Ovary (tissue), 10 donors: ENCODE measurements at regions of chr3 and their contacts with region 1.

Region 1: GRCh38 chr3:47475570-47476329 is at the start of gene SCAP:
- DNase-seq: peak; percentile 92 to 97 (median 95)
- H3K4me3 ChIP-seq: peak within 1 kb of the TSS; percentile 66
- H3K27ac ChIP-seq: peak within 1 kb of the TSS in 1 of 2 donors; percentile 70
- H3K4me1 ChIP-seq: peaks cover 12% of the 10 kb centered on the region
- H3K27me3 ChIP-seq: no peaks in the 10 kb centered on the region
- CTCF ChIP-seq: peak; percentile 88 to 99 (median 99)
- EP300 ChIP-seq: no peak
- POLR2A ChIP-seq: peak; percentile 41
- total RNA-seq, gene SCAP: 53.7 to 104 (median 80.9) TPM

Region 2: GRCh38 chr3:46629551-46630517 is 845.9 kb before region 1 on chr3:
- intact Hi-C with region 1: no loop called
- DNase-seq: peak; percentile 81 to 90 (median 85)
- H3K4me3 ChIP-seq: peak overlapping the region; percentile 17
- H3K27ac ChIP-seq: peak overlapping the region; percentile 63 to 84
- H3K4me1 ChIP-seq: peaks cover 4% of the 10 kb centered on the region
- H3K27me3 ChIP-seq: no peaks in the 10 kb centered on the region
- CTCF ChIP-seq: peak; percentile 96 to 98 (median 98)
- EP300 ChIP-seq: no peak
- POLR2A ChIP-seq: no peak

Region 3: DNA sequence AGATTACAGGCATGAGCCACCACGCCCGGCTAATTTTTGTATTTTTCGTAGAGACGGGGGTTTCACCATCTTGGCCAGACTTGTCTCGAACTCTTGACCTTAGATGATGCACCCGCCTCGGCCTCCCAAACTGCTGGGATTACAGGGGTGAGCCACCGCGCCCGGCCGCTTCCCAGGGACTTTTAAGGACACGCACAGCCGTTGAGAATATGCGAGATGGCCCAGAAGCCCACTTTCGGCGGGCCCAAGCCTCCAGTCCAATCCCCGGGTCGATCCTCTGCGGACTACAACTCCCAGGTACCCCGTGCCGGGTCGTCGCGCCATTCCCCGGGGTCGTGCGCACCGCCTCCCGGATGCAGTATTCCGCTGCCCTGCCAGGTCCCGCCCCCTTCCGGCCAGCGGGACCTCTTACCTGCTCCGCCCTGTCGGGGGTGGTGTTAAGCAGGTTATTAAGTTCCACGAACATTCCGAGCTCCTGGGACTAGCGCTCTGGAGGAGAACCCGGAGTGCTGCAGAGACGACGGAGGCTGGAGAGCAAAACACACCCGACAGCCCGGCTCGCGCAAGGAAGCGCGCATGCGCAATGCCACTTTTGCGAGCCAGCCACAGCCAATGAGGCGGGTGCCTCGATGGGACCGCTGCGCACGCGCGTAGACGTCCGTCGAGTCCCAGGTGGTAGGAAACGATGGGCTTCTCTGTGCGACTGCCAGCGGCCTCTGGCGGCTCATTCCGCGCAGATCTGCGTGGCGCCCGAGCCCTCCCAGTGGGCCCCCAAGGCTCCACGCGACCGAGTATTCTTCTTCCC is 37.6 kb after region 1 on chr3 and contains the start of gene ELP6:
- intact Hi-C with region 1: loop called in 1 of 4 experiments (anchors 5 kb)
- DNase-seq: peak; percentile 97 to 98 (median 97)
- H3K4me3 ChIP-seq: peak within 1 kb of the TSS; percentile 81
- H3K27ac ChIP-seq: peak within 1 kb of the TSS; percentile 53 to 96
- H3K4me1 ChIP-seq: peaks cover 6% of the 10 kb centered on the region
- H3K27me3 ChIP-seq: no peaks in the 10 kb centered on the region
- CTCF ChIP-seq: peak; percentile 18 to 64 (median 61)
- EP300 ChIP-seq: no peak
- POLR2A ChIP-seq: peak; percentile 59
- total RNA-seq, gene ELP6: 20.1 to 30.3 (median 25.0) TPM